ENCODE measurements at regions of chr2 and their contacts with region 1.

Region 1: DNA sequence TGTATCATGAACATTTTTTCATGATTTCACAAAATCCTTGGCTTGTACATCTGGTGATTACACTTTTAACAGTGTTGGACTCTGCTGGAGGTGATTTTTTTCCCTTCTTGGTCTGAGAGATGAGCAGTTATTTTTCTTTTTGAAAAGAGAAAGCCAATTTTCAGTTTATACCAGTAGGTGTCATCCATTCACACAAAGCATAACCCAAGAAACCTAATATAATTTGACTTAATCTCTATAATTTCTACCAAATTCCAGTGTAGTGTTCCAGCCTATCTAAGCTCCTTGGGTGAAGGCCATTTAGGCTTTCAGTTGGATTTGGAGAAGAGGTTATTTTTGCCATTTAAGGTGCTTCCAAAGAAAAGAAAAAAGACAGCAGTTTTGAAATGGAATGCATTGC is 7.7 kb upstream of the ICOS start:
- DNase-seq: no peak
- ATAC-seq: no peak
- H3K4me3 Mint-ChIP-seq: no peak overlapping the region
- H3K27ac Mint-ChIP-seq: no peak overlapping the region
- H3K4me1 Mint-ChIP-seq: peaks cover 38% of the 10 kb centered on the region
- H3K27me3 Mint-ChIP-seq: peaks cover 4% of the 10 kb centered on the region
- CTCF ChIP-seq: peak; percentile 74

Region 2: DNA sequence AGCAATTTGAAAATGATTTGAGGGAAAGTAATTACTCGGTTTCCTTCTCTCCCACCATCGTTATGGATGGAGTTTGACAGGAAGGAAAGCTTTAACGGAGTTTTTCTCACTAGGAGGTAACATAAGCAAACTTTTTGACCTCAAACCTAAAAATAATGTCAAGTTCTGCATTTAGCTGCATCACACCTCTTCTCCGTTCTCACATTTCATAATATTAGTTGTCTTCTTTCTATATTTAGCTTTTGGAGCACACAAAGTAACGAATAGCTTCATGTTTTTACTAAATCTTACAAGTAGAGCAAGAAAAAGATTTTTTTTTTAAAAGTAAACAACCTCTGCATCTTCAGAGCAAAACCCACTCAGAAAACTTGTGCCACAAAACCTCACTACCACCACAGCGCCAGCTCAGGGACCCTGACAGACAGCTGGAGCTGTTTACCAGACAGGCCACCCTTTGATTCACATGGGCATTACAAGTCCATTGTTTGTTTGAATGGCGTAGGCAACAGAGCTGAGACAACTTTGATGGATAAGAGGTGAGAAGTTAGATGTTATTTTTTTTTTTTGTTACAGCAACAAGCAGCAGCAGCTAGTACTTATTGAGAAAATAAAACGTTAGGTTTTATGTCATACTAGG is 14.2 kb before region 1 on chr2:
- CTCF ChIA-PET with region 1: interaction called, 13 read pairs
- POLR2A ChIA-PET with region 1: no interaction called
- intact Hi-C with region 1: no loop called
- DNase-seq: peak; percentile 54
- ATAC-seq: peak; percentile 42
- H3K4me3 Mint-ChIP-seq: no peak overlapping the region
- H3K27ac Mint-ChIP-seq: no peak overlapping the region
- H3K4me1 Mint-ChIP-seq: peaks cover 32% of the 10 kb centered on the region
- H3K27me3 Mint-ChIP-seq: peaks cover 5% of the 10 kb centered on the region
- CTCF ChIP-seq: no peak

Region 3: DNA sequence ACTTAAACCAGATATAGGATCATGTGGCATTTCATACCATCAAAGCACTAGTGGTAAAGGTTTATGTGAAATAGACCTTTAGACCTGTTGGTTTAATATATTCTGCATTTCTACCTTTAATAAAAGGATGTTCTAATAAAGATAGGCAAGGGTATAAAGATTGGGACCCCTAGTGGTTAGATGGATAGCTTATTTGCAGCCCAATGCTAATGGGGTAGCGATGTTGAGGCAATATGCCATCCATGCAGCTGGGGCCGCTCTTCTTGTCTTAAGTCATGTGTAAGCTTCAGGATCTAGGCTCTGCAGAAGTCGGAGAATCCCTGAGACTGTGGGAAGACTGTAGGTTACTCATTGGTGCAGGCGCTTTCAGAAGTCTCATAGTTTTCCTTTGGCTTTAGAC is 122.6 kb after region 1 on chr2:
- CTCF ChIA-PET with region 1: interaction called, 14 read pairs
- POLR2A ChIA-PET with region 1: interaction called, 3 read pairs
- intact Hi-C with region 1: no loop called
- DNase-seq: no peak
- ATAC-seq: peak; percentile 50
- H3K4me3 Mint-ChIP-seq: no peak overlapping the region
- H3K27ac Mint-ChIP-seq: no peak overlapping the region
- H3K4me1 Mint-ChIP-seq: peaks cover 16% of the 10 kb centered on the region
- H3K27me3 Mint-ChIP-seq: no peaks in the 10 kb centered on the region
- CTCF ChIP-seq: peak; percentile 44

Measured in activated CD8-positive, alpha-beta T cell treated with anti-CD3 and anti-CD28 coated beads for 36 hours (primary cell).